ENCODE measurements at regions of chr19 and their contacts with region 1.

Region 1: GRCh38 chr19:3792114-3792513 is 5.9 kb upstream of the MATK start:
- DNase-seq: no peak
- H3K4me3 ChIP-seq: no peak overlapping the region
- H3K27ac ChIP-seq: no peak overlapping the region
- H3K4me1 ChIP-seq: no peaks in the 10 kb centered on the region
- H3K27me3 ChIP-seq: no peaks in the 10 kb centered on the region
- CTCF ChIP-seq: no peak

Region 2: GRCh38 chr19:3753631-3754410 is 38.3 kb before region 1 on chr19:
- CTCF ChIA-PET with region 1: no interaction called
- dilution Hi-C with region 1: loop called (anchors 5 kb)
- in situ Hi-C with region 1: no loop called
- intact Hi-C with region 1: no loop called
- DNase-seq: no peak
- H3K4me3 ChIP-seq: no peak overlapping the region
- H3K27ac ChIP-seq: no peak overlapping the region
- H3K4me1 ChIP-seq: no peaks in the 10 kb centered on the region
- H3K27me3 ChIP-seq: no peaks in the 10 kb centered on the region
- CTCF ChIP-seq: no peak

Region 3: DNA sequence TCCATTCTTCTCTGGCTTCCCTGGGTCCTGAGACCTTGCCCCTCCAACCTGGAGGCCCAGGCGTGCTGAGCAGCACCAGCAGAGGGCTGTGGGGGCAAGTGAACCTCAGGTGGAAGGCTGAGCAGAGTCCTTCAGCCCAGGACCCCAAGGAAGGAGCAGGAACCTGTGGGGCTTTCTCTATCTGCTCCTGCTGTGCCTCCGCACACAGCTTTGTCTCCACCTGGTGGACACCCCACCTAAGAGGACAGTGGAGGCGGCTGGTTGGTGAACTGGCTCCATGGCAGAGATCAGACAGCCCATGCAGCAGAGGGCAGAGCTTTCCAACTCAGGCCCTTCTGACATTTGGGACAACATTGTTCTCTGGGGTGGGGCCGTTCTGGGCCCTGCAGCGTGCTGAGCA is 57.0 kb after region 1 on chr19:
- CTCF ChIA-PET with region 1: no interaction called
- dilution Hi-C with region 1: no loop called
- in situ Hi-C with region 1: no loop called
- intact Hi-C with region 1: no loop called
- DNase-seq: peak; percentile 34
- H3K4me3 ChIP-seq: no peak overlapping the region
- H3K27ac ChIP-seq: no peak overlapping the region
- H3K4me1 ChIP-seq: no peaks in the 10 kb centered on the region
- H3K27me3 ChIP-seq: peaks cover 15% of the 10 kb centered on the region
- CTCF ChIP-seq: peak; percentile 14 to 48

Region 4: GRCh38 chr19:3868770-3869456 is 76.8 kb after region 1 on chr19 and contains the start of gene ZFR2:
- CTCF ChIA-PET with region 1: no interaction called
- dilution Hi-C with region 1: no loop called
- in situ Hi-C with region 1: no loop called
- intact Hi-C with region 1: no loop called
- DNase-seq: no peak
- H3K4me3 ChIP-seq: no peak within 1 kb of the TSS
- H3K27ac ChIP-seq: no peak within 1 kb of the TSS
- H3K4me1 ChIP-seq: no peaks in the 10 kb centered on the region
- H3K27me3 ChIP-seq: peaks cover 20% of the 10 kb centered on the region
- CTCF ChIP-seq: no peak
- total RNA-seq, gene ZFR2: not detected